GM23248 (cell line): ENCODE measurements at regions of chrX and their contacts with region 1.

Region 1: DNA sequence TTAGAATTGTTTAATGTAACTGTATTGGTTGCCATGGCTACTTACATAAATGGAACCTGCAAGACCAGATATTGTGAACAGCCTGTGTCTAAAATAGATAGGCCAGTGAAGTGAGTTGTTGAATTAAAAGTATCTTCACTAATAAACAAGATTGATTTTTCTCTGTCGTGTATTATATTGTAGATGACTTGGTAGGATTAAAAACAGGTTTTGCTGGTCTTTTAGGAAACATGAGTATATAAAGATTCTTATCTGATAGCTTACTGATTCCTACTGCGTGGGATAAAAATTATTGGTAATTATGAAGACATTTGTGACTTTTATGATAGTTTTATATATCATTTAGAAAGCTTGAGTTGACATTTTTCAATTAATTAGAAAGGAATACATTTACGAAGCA is 162.1 kb downstream of the KDM6A start:
- DNase-seq: no peak
- H3K4me3 ChIP-seq: no peak overlapping the region
- H3K27ac ChIP-seq: no peak overlapping the region
- H3K4me1 ChIP-seq: no peaks in the 10 kb centered on the region
- H3K27me3 ChIP-seq: no peaks in the 10 kb centered on the region

Region 2: GRCh38 chrX:43525901-43526610 is 1509.0 kb before region 1 on chrX:
- in situ Hi-C with region 1: no loop called
- DNase-seq: no peak
- H3K4me3 ChIP-seq: no peak overlapping the region
- H3K27ac ChIP-seq: no peak overlapping the region
- H3K4me1 ChIP-seq: no peaks in the 10 kb centered on the region
- H3K27me3 ChIP-seq: no peaks in the 10 kb centered on the region

Region 3: DNA sequence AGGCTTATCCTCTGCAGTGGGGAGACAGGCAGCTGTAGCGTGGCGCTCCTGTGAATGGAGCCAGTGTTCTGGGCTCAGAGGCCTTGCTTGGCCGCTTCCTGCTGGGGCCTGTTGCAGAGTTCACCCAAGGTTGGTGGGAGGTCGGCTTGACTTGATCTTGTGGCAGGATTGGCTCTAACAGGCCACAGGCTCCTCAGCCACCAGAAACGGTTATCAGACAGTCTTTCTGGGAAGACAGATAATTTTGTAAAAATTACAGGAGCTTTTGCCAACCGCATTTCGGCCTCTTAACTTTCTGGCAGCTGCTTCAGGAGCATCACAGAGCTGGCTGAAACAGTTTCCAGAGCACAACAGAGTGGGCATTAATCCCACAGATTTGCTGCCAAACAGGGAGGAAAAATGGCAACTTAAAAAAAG is 99.2 kb after region 1 on chrX:
- in situ Hi-C with region 1: loop called (anchors 25 kb)
- DNase-seq: no peak
- H3K4me3 ChIP-seq: no peak overlapping the region
- H3K27ac ChIP-seq: no peak overlapping the region
- H3K4me1 ChIP-seq: no peaks in the 10 kb centered on the region
- H3K27me3 ChIP-seq: no peaks in the 10 kb centered on the region

Region 4: DNA sequence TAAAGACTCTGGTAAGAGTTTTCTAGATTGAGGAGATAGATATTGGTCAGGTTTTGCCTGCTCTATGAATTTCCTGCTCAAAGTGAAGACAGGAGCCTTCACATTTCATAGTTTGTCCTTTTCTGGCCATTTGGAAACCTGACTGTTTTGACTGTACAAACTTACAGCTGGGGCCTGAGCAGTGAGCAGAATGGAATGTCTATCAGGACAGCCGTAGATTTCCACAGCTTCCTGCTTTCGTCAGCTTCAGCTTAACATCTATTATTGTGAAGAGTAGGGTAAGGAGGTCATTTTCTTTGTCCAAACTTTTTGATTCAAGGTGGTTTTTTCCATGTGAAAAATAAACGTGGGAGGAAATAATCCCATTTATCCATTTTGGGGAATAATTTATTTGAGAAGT is 289.9 kb after region 1 on chrX:
- in situ Hi-C with region 1: no loop called
- DNase-seq: no peak
- H3K4me3 ChIP-seq: no peak overlapping the region
- H3K27ac ChIP-seq: no peak overlapping the region
- H3K4me1 ChIP-seq: peaks cover 22% of the 10 kb centered on the region
- H3K27me3 ChIP-seq: no peaks in the 10 kb centered on the region